H1 (cell line): ENCODE measurements at regions of chr10 and their contacts with region 1.

Region 1: GRCh38 chr10:1109795-1110673 is 53.8 kb downstream of the WDR37 start:
- DNase-seq: peak; percentile 69 to 81
- H3K4me3 ChIP-seq: no peak overlapping the region
- H3K27ac ChIP-seq: no peak overlapping the region
- H3K4me1 ChIP-seq: peaks cover 6 to 10% (median 8%) of the 10 kb centered on the region in 4 experiments
- H3K27me3 ChIP-seq: no peaks in the 10 kb centered on the region
- CTCF ChIP-seq: peak; percentile 71 to 91 (median 88)
- EP300 ChIP-seq: no peak
- POLR2A ChIP-seq: no peak
- RAD21 ChIP-seq: peak; percentile 84 to 85

Region 2: DNA sequence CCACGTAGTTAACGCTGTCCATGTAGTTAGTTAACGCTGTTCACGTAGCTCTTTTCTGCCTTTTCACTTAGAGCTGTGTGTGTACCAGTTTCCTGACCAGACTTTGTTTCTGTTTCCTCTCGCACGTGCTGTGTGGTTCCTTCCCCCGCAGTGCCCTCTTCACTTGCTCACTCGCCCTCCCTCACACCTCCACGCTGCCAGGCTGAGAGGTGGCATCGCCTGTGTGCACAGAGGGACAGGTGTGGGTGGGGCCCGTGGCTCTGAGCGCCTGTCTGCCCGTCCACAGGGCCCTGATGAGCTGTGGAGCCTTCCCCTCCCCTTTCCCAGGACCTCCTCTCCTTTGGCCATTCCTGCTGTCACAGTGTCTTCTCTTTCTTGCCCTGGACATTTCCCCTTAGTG is 23.2 kb before region 1 on chr10:
- CTCF ChIA-PET with region 1: interaction called, 11 read pairs
- POLR2A ChIA-PET with region 1: interaction called, 3 read pairs
- DNase-seq: no peak
- H3K4me3 ChIP-seq: no peak overlapping the region
- H3K27ac ChIP-seq: no peak overlapping the region
- H3K4me1 ChIP-seq: no peaks in the 10 kb centered on the region
- H3K27me3 ChIP-seq: no peaks in the 10 kb centered on the region
- CTCF ChIP-seq: no peak
- EP300 ChIP-seq: no peak
- POLR2A ChIP-seq: no peak
- RAD21 ChIP-seq: no peak